Activated CD4-positive, alpha-beta T cell treated with anti-CD3 and anti-CD28 coated beads for 36 hours (primary cell): ENCODE measurements at regions of chr1 and their contacts with region 1.

Region 1: GRCh38 chr1:201376464-201377374 is 761 bp downstream of the TNNT2 start:
- DNase-seq: peak; percentile 47
- ATAC-seq: peak; percentile 70
- H3K4me3 Mint-ChIP-seq: no peak overlapping the region
- H3K27ac Mint-ChIP-seq: no peak overlapping the region
- H3K4me1 Mint-ChIP-seq: no peaks in the 10 kb centered on the region
- H3K27me3 Mint-ChIP-seq: peaks cover 9% of the 10 kb centered on the region

Region 2: DNA sequence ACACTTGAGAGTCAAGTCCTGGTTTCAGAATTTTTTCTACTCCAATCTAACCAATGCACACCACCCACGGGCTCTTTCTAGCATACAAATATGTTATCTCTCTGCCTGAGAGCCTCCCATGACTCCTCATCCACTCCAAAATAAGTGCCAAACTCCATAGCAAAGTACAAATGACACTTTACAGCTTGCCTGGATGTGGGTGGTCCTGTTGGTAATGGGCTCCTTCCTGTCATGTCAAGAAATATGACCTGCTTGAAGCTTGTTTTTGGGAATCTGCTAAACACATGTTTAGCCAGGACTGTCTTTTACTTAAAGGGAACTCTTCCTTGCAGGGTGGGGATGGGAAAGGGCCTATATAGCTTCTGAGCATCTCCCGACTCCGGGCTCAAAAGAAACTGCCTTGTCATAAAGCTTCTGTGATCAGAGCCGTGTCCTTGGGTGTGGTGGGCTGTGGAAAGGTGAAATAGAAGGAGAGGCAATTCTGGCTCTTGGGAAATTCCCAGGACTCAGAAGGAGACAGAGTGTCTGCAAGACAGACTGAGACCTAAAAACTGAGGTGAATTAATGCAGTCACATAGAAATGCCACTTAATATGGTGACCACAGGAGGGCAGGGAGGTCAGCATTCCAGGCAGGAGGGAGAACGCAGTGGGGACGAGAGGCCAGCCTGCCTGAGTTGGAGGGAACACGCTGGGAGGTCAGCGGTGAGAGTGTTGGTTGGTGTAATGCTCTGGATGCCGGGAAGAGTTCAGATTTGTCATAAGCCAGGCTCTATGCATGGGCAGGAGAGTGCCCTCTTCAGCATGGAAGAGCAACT is 192.2 kb before region 1 on chr1:
- CTCF ChIA-PET with region 1: no interaction called
- POLR2A ChIA-PET with region 1: no interaction called
- intact Hi-C with region 1: no loop called
- DNase-seq: peak; percentile 14
- ATAC-seq: peak; percentile 75
- H3K4me3 Mint-ChIP-seq: no peak overlapping the region
- H3K27ac Mint-ChIP-seq: no peak overlapping the region
- H3K4me1 Mint-ChIP-seq: no peaks in the 10 kb centered on the region
- H3K27me3 Mint-ChIP-seq: peaks cover 26% of the 10 kb centered on the region

Region 3: GRCh38 chr1:201361652-201362504 is 14.8 kb before region 1 on chr1:
- CTCF ChIA-PET with region 1: interaction called, 22 read pairs
- POLR2A ChIA-PET with region 1: no interaction called
- intact Hi-C with region 1: no loop called
- DNase-seq: peak; percentile 62
- ATAC-seq: peak; percentile 73
- H3K4me3 Mint-ChIP-seq: no peak overlapping the region
- H3K27ac Mint-ChIP-seq: no peak overlapping the region
- H3K4me1 Mint-ChIP-seq: no peaks in the 10 kb centered on the region
- H3K27me3 Mint-ChIP-seq: peaks cover 5% of the 10 kb centered on the region